Activated CD4-positive, alpha-beta T cell treated with anti-CD3 and anti-CD28 coated beads, Interleukin-2, amount 10 ng/mL, durations not matched to agents 24 days and 14 days (primary cell): ENCODE measurements at regions of chr16 and their contacts with region 1.

Region 1: GRCh38 chr16:25966172-25967097 is 274.7 kb downstream of the HS3ST4 start:
- DNase-seq: peak; percentile 79
- H3K4me3 Mint-ChIP-seq: peak overlapping the region; percentile 57
- H3K27ac Mint-ChIP-seq: peak overlapping the region; percentile 83
- H3K4me1 Mint-ChIP-seq: peaks cover 35% of the 10 kb centered on the region
- H3K27me3 Mint-ChIP-seq: no peaks in the 10 kb centered on the region

Region 2: GRCh38 chr16:27109666-27110523 is 1143.5 kb after region 1 on chr16:
- intact Hi-C with region 1: loop called (anchors 10 kb)
- DNase-seq: peak; percentile 95
- H3K4me3 Mint-ChIP-seq: peak overlapping the region; percentile 80
- H3K27ac Mint-ChIP-seq: no peak overlapping the region
- H3K4me1 Mint-ChIP-seq: peaks cover 2% of the 10 kb centered on the region
- H3K27me3 Mint-ChIP-seq: peaks cover 7% of the 10 kb centered on the region